Left ventricle myocardium inferior (tissue), 1 donor: ENCODE measurements at regions of chr2 and their contacts with region 1.

Region 1: GRCh38 chr2:164479460-164479859 is 141.8 kb downstream of the GRB14 start:
- DNase-seq: no peak
- H3K4me3 ChIP-seq: no peak overlapping the region
- H3K27ac ChIP-seq: no peak overlapping the region
- H3K4me1 ChIP-seq: no peaks in the 10 kb centered on the region
- H3K27me3 ChIP-seq: no peaks in the 10 kb centered on the region
- CTCF ChIP-seq: peak; percentile 66

Region 2: DNA sequence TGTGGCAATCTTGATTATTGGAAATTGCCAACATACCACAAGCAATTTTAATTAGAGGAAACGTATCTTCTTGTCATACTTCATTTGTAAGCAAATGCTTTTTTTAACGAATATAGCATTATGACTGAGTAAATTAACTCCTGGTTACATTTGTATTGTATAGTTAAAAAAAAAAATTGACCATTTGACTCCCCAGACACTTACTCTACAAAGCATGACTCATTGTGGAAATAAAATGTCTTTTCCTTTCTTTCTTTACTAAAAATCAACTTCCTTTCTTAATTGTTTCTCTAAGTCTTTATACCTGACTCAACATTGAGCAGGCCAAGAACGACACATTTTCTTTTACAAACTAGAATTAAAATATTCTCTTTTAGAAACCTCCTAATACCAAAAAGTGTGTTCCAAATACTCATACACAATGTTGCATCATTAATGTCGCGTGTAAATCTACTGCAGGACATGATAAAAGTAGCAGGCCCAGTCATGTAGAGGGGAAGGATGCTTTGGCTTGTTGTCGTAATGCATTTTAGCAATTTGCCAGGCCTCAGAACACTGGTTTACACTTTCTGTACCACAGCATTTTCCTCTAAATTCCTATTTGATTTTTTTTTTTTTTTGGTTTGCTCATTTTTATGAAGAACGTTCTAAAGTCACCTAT is 1291.3 kb before region 1 on chr2:
- intact Hi-C with region 1: loop called (anchors 5 kb)
- DNase-seq: no peak
- H3K4me3 ChIP-seq: no peak overlapping the region
- H3K27ac ChIP-seq: no peak overlapping the region
- H3K4me1 ChIP-seq: no peaks in the 10 kb centered on the region
- H3K27me3 ChIP-seq: no peaks in the 10 kb centered on the region
- CTCF ChIP-seq: no peak